ENCODE measurements at regions of chr1 and their contacts with region 1.

Region 1: GRCh38 chr1:198681831-198682759 is 43.3 kb downstream of the PTPRC start:
- DNase-seq: peak in 6 of 10 donors; percentile 14 to 77 (median 30)

Region 2: GRCh38 chr1:197521118-197521739 is 1160.9 kb before region 1 on chr1:
- intact Hi-C with region 1: loop called (anchors 10 kb)
- DNase-seq: no peak

Region 3: GRCh38 chr1:198633675-198634121 is 48.4 kb before region 1 on chr1:
- intact Hi-C with region 1: no loop called
- DNase-seq: no peak

Region 4: DNA sequence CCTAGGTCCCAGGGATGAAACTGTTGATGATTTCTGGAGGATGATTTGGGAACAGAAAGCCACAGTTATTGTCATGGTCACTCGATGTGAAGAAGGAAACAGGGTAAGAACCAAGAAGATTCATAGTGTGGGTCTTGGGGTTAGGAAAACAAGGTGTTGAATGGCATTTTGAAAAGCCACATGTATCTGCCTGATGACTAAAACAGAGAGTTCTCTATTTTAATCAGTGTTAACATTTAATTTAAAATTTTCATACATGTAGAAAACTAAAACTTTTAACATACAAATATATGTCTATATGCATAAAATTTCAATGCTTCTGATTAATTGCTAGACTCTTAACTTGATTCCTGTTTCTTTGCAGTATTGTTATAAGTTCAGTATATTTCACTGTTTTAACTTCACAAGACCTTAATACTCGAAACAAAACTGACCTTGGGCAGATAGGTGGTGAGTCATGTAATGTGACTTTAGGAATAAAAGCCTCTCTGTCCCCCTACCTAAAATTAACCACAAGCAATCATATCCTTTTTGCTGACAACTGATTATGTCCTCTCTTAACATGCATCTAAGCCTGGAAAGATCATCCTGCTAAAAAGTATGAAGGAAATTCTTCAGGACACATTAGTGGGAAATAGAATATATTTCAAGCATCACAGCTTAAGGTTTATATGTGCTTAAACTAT is 52.4 kb after region 1 on chr1:
- intact Hi-C with region 1: no loop called
- DNase-seq: no peak